ENCODE measurements at regions of chr4 and their contacts with region 1.

Region 1: GRCh38 chr4:13815231-13815630 is 187.7 kb upstream of the BOD1L1 start:
- DNase-seq: no peak

Region 2: GRCh38 chr4:13750594-13750993 is 64.6 kb before region 1 on chr4:
- intact Hi-C with region 1: loop called in 1 of 2 experiments (anchors 10 kb)
- DNase-seq: no peak

Measured in posterior vena cava (tissue), 2 donors.